ENCODE measurements at regions of chr9 and their contacts with region 1.

Region 1: GRCh38 chr9:136363606-136364370 is at the start of gene DNLZ:
- DNase-seq: peak; percentile 93
- ATAC-seq: peak; percentile 73
- H3K4me3 Mint-ChIP-seq: peak within 1 kb of the TSS; percentile 79
- H3K27ac Mint-ChIP-seq: peak within 1 kb of the TSS; percentile 80
- H3K4me1 Mint-ChIP-seq: peaks cover 10% of the 10 kb centered on the region
- H3K27me3 Mint-ChIP-seq: no peaks in the 10 kb centered on the region
- total RNA-seq, gene DNLZ: 11.7 to 12.8 TPM

Region 2: GRCh38 chr9:136118320-136119060 is 245.3 kb before region 1 on chr9 and contains the start of gene TMEM250:
- CTCF ChIA-PET with region 1: no interaction called
- POLR2A ChIA-PET with region 1: no interaction called
- intact Hi-C with region 1: loop called in 1 of 2 experiments (anchors 1 kb)
- DNase-seq: peak; percentile 98
- ATAC-seq: peak; percentile 92
- H3K4me3 Mint-ChIP-seq: peak within 1 kb of the TSS; percentile 77
- H3K27ac Mint-ChIP-seq: peak within 1 kb of the TSS; percentile 83
- H3K4me1 Mint-ChIP-seq: peaks cover 21% of the 10 kb centered on the region
- H3K27me3 Mint-ChIP-seq: no peaks in the 10 kb centered on the region
- total RNA-seq, gene TMEM250: 25.4 to 28.8 TPM

Region 3: DNA sequence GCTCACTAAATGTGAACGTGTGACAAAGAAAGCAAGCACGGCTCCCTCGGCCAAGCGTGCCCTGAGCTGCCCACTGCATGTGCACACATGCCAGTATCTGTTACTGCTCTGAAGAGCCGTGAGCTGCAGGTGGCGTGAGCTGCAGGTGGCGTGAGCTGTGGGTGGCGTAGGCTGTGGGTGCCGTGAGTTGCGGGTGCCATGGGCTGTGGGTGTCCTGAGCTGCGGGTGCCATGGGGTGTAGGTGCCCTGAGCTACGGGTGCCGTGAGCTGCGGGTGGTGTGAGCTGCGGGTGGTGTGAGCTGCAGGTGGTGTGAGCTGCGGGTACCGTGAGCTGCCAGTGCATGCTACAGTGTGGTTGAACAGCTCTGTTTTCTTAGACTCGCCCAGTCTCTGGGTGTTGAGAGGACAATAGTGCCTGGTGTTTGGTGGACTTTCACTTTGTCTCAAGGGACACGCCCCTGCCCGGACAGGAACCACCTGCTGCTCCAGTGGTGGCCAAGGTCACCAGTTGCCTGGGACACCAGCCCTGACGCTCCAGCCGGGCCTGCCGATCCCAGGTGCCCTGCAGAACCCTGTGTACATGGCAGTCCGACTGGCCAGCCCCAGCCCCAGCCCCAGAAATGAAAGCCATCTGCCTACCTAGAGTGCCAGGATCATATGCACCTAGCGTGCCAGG is 66.6 kb before region 1 on chr9:
- CTCF ChIA-PET with region 1: no interaction called
- POLR2A ChIA-PET with region 1: no interaction called
- intact Hi-C with region 1: no loop called
- DNase-seq: no peak
- ATAC-seq: no peak
- H3K4me3 Mint-ChIP-seq: no peak overlapping the region
- H3K27ac Mint-ChIP-seq: no peak overlapping the region
- H3K4me1 Mint-ChIP-seq: no peaks in the 10 kb centered on the region
- H3K27me3 Mint-ChIP-seq: no peaks in the 10 kb centered on the region

Region 4: GRCh38 chr9:136327313-136327974 is 36.3 kb before region 1 on chr9 and contains the start of gene GPSM1:
- CTCF ChIA-PET with region 1: interaction called, 3 read pairs
- POLR2A ChIA-PET with region 1: no interaction called
- intact Hi-C with region 1: loop called (anchors 1 to 5 kb)
- DNase-seq: peak; percentile 65
- ATAC-seq: peak; percentile 59
- H3K4me3 Mint-ChIP-seq: peak within 1 kb of the TSS; percentile 59
- H3K27ac Mint-ChIP-seq: no peak within 1 kb of the TSS
- H3K4me1 Mint-ChIP-seq: peaks cover 6% of the 10 kb centered on the region
- H3K27me3 Mint-ChIP-seq: no peaks in the 10 kb centered on the region
- total RNA-seq, gene GPSM1: 9.6 to 10.8 TPM

Region 5: GRCh38 chr9:136439550-136440408 is 76.0 kb after region 1 on chr9 and contains the start of gene INPP5E:
- CTCF ChIA-PET with region 1: no interaction called
- POLR2A ChIA-PET with region 1: interaction called, 3 read pairs
- intact Hi-C with region 1: loop called in 1 of 2 experiments (anchors 1 kb)
- DNase-seq: peak; percentile 89
- ATAC-seq: peak; percentile 85
- H3K4me3 Mint-ChIP-seq: peak within 1 kb of the TSS; percentile 80
- H3K27ac Mint-ChIP-seq: no peak within 1 kb of the TSS
- H3K4me1 Mint-ChIP-seq: peaks cover 21% of the 10 kb centered on the region
- H3K27me3 Mint-ChIP-seq: no peaks in the 10 kb centered on the region
- total RNA-seq, gene INPP5E: 13.5 to 14.1 TPM

Region 6: DNA sequence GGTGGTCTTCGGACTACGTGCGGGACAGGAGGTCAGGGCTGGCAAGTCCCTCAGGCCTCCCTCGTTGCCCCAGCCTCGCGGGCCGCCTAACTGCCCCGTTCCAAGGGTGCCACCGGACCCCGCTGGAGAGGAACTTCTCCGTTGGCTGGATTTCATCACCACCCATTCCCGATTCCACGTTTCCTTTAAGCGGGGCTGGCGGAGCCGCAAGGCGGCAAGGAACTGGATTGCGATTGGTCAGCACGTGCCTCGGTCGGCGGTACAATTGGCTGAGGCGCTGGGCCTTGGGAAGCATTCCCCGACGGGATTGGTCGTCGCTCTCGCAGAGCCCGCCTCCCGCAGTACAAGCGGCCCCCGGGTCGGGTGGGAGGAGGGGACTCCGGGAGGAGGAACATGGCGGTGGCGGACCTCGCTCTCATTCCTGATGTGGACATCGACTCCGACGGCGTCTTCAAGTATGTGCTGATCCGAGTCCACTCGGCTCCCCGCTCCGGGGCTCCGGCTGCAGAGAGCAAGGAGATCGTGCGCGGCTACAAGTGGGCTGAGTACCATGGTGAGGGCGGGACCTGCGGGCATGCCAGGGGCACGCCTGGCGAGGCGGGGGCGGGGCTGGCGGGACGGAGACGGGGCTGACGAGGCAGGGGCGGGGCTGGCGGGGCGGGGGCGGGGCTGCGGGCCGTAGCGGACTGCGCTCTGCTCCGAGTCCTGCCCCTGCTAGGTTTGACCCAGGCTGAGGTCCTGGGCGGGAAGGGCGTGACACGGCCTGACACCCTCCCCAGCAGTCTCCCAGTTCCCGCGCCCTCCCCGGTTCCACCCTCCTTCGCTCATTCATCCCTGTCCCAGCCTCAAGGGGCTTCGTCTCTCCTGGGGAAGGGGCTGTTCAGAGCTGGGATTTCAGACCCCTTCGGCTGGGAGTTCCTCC is 485.5 kb after region 1 on chr9 and contains the start of gene PHPT1:
- CTCF ChIA-PET with region 1: no interaction called
- POLR2A ChIA-PET with region 1: no interaction called
- intact Hi-C with region 1: loop called in 1 of 2 experiments (anchors 1 kb)
- DNase-seq: peak; percentile 98
- ATAC-seq: peak; percentile 91
- H3K4me3 Mint-ChIP-seq: peak within 1 kb of the TSS; percentile 93
- H3K27ac Mint-ChIP-seq: peak within 1 kb of the TSS; percentile 88
- H3K4me1 Mint-ChIP-seq: peaks cover 8% of the 10 kb centered on the region
- H3K27me3 Mint-ChIP-seq: peaks cover 12% of the 10 kb centered on the region
- total RNA-seq, gene PHPT1: 94.5 to 98.9 TPM

Measured in activated CD4-positive, alpha-beta T cell treated with anti-CD3 and anti-CD28 coated beads for 36 hours (primary cell).